ENCODE measurements at regions of chr2 and their contacts with region 1.

Region 1: GRCh38 chr2:54838585-54839035 is 115.1 kb downstream of the EML6 start:
- DNase-seq: peak in 1 of 2 donors; percentile 67
- H3K4me3 ChIP-seq: no peak overlapping the region
- CTCF ChIP-seq: no peak
- POLR2A ChIP-seq: no peak

Region 2: GRCh38 chr2:54723131-54723995 is 115.2 kb before region 1 on chr2 and contains the start of gene EML6:
- intact Hi-C with region 1: loop called (anchors 10 kb)
- DNase-seq: peak; percentile 98 to 99
- H3K4me3 ChIP-seq: peak within 1 kb of the TSS; percentile 49
- CTCF ChIP-seq: peak in 1 of 3 donors; percentile 49
- POLR2A ChIP-seq: no peak
- total RNA-seq, gene EML6: 1.8 to 4.4 (median 3.3) TPM

Region 3: DNA sequence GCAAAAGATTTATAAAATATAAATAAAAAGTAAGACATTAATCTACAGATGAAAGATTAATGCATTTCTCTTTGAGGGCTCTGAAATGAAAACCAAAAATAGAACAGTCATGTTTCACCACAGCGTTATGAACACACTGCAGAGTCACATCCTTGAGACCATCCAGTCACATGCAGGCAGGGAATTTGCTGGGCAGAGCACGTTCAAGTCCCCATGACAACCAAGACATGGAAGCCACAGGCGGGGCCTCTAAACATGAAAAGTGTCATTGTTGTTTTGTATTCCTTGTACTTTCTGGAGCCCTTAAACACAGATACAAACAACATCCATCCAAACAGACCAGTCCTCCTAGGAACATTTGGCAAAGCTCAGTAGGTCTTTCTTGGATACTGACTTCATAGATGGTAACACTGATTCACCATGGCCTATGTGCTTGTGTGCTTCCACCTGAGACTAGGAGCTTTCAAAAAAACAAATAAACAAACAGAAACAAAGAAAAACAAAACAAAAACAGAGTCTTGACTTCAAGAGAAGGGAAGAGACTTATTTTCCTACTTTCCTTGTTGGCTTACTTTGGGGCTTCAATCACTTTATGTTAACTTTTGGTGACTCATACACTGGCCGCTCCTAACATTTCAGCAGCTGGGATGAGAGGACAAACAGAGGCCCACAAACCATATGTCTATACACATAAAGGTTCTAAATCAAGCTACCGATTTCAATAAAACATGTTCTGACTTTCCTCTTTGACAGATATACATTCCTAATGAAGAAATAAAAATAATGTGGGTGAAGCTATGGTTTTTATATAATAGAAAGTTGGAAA is 1245.7 kb after region 1 on chr2:
- intact Hi-C with region 1: no loop called
- DNase-seq: no peak
- H3K4me3 ChIP-seq: no peak overlapping the region
- CTCF ChIP-seq: no peak
- POLR2A ChIP-seq: no peak